Activated CD4-positive, alpha-beta T cell treated with anti-CD3 and anti-CD28 coated beads, Interleukin-2, amount 10 ng/mL, durations not matched to agents 24 days and 14 days (primary cell): ENCODE measurements at regions of chr11 and their contacts with region 1.

Region 1: DNA sequence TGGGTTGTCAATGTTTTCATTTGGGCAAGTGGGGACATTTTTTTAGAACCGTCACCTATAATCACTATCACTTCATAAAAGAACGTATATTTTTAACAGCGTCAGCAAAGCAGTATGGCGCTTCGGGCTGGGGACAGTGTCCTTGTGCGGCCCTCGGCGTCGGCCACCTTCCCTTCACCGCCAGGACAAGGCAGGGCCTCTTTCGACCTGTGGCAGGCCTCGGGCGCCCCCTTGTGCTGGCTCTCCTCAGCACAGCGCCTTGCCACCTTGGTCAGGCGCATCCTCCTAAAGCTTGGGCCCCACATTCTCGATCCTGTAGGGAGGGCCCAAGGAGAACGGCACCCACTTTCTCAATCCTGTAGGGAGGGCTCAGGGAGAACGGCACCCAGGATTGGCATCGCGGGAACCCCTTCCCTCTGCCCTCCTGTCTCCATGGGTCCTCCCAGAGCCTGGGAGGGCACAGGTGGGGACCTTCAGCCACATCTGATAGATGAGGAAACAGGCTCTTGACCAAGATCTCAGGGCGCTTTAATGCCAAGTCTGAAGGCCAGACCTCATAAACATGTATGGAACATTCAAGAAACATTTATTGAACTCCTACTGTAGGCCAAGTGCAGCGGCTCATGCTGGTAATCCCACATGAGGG is 11.5 kb upstream of the FADD start:
- DNase-seq: peak; percentile 90
- H3K4me3 Mint-ChIP-seq: no peak overlapping the region
- H3K27ac Mint-ChIP-seq: no peak overlapping the region
- H3K4me1 Mint-ChIP-seq: peaks cover 3% of the 10 kb centered on the region
- H3K27me3 Mint-ChIP-seq: no peaks in the 10 kb centered on the region

Region 2: DNA sequence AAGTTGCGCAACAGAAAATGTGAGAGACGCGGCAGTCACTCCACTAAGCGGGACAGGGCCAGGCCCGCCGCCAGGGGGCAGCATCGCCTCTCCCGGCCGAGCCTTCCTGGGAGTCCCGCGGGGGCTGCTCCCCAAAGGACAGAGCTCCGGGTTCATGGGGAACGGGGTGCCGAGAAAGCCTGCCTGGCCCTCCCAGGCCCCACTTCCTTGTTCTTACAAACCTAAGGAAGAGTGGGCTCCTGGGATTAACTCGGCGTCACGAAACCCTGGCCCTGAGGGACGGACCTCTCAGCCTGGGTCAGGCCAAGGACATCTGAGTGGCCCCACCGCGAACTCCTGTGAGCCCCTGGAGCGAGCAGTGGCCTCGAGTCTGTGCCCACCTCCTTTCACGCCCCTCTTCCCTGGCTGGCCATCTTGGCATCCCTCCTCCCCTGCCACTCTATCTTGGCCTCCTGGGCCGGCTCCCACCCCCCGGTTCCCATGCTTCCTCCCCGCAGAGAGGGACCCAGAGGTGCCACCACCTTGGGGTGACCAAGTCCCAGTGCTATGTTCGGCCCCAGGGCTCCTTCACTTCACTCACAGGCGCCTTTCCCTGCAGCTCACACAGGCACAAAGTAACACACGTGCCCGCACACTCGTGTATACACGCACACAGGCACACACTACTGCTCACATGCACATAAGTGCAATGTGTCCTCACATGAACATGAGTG is 272.5 kb before region 1 on chr11:
- intact Hi-C with region 1: loop called (anchors 1 kb)
- DNase-seq: peak; percentile 91
- H3K4me3 Mint-ChIP-seq: no peak overlapping the region
- H3K27ac Mint-ChIP-seq: peak overlapping the region; percentile 41
- H3K4me1 Mint-ChIP-seq: no peaks in the 10 kb centered on the region
- H3K27me3 Mint-ChIP-seq: peaks cover 12% of the 10 kb centered on the region